Left cardiac atrium (tissue), 4 donors: ENCODE measurements at regions of chr18 and their contacts with region 1.

Region 1: DNA sequence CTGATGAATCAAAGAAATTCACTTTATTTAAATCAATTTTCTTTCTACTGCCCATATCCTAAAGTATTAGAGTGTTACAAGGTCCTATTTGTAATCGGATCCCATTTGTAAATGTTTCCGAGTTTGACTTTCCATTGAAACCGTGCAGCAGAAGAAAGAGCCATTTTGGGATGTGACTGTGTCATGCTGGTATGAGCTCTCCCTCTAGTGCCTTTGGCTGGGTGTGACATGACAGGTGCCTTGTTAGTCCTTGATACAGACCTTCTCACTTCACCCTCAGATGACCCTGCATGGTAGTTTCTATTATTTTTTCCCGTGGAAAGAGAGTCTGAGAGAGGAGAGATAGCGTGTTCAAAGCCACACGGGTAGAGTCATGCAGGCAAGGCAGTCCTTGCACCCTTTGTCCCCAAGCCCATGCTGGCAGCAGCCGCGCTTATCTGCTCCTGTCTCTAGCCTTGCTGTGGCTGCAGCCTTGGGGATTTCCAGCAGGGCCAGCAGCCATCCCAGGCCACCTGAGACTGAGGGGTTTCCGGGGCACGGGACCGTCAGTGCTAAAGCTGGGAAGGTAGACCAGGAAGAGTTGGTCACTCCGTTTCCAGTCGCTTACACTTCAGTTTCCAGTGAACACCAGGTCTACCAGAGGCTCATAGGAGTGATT is 21.4 kb downstream of the CHMP1B start:
- DNase-seq: no peak
- ATAC-seq: peak; percentile 87 to 92

Region 2: GRCh38 chr18:11654736-11655605 is 217.6 kb before region 1 on chr18:
- intact Hi-C with region 1: loop called in 1 of 2 experiments (anchors 10 kb)
- DNase-seq: peak; percentile 57
- ATAC-seq: peak; percentile 77 to 80